ENCODE measurements at regions of chr11 and their contacts with region 1.

Region 1: DNA sequence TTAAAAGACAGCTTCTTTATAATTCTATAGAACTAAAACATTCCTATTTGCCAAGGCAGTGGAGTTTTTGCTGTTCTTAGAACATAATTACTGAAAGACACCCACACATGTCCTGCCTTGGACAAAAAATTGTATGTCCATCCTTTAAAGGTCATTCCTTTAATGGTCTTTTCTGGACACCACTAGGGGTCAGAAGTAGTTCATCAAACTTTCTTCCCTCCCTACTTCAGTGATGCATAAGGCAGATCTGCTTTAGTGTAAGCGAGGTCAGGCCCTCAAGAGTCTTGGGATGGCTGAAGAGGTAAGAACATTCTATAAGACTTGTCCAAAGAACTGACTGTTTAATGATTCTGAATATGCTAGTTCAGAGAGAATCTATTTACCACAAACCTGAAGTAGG is 4.3 kb upstream of the OR51V1 start:
- DNase-seq: peak; percentile 38
- CTCF ChIP-seq: peak; percentile 54

Region 2: DNA sequence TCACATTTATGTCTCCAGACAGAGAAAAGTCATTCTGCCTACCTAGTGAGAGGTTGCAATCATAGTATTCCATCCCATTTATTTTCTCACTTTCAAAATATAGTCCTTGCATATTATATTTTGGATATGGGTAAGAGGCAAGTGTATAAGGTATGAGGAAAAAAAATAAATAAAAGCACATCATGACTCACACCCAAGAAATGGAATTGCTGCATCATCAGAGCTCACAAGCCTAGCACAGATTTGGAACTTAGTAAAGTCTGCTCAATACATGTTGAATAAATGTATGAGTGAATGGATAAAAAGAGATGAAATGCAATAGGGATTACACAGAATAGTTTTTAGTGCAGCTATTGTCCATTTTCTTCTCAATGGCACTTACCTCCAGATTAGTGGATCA is 278.2 kb before region 1 on chr11:
- in situ Hi-C with region 1: no loop called
- DNase-seq: no peak
- CTCF ChIP-seq: no peak

Region 3: DNA sequence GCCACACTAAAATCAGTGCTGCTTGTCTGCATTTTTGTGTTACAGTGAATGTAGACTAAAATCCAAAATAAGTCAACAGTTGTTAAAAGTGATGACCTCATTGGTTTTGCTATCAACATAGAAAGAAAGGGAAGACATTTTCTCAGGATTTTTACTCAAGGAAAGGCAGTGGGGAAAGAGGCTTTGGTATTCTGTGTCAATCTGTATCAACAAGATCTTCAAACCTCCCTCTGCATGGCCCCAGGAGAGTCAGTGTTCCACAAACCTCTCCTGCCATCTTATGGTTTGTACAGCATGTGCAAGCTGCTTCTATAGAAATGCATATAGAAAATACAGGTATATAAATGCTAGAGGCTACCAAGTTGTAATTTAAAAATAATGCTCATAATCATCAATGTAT is 165.0 kb after region 1 on chr11:
- in situ Hi-C with region 1: loop called (anchors 10 kb)
- DNase-seq: peak; percentile 14
- CTCF ChIP-seq: peak; percentile 50

Measured in GM13977 (cell line).